OCI-LY7 (cell line): ENCODE measurements at regions of chr3 and their contacts with region 1.

Region 1: GRCh38 chr3:120182724-120183524 is 88.7 kb upstream of the GSK3B start:
- DNase-seq: peak; percentile 18
- H3K4me3 ChIP-seq: no peak overlapping the region
- H3K27ac ChIP-seq: no peak overlapping the region
- H3K4me1 ChIP-seq: no peaks in the 10 kb centered on the region
- CTCF ChIP-seq: peak; percentile 67

Region 2: DNA sequence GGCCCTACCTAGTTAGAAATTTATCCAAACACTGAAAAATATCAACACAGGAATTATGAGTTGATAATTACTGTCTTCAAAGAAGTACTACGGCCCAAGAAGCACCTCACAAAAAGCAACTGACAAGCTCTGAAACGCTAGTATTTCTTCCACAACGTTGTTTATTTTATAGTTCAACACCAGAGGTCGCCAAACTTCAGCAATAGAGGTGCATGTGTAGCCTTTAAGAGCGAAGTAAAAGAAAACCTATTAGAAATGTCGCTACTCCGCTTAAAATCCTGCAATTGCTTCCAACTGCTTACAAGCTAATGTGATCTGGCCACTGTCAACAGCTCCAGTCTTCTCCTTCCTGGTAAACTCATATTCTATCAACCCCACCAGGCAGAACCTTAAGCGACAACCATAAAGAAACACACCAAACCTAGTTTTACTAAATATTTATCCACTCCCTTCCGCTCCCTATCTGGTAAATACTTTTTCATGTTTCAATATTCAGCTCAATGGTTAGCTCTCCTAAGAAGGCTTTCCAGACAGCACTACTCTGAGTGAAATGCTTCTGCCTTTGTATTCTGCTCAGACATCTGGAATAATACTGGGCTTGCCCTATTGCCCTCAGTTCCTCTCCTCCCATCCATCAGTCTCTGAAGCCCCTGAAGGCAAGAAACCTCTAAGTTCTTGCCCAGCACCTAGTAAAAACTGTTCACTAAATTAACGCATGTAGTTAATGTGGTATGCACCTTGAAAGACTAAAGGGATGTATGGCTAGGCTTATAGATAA is 290.8 kb before region 1 on chr3:
- CTCF ChIA-PET with region 1: no interaction called
- POLR2A ChIA-PET with region 1: no interaction called
- intact Hi-C with region 1: loop called (anchors 5 kb)
- DNase-seq: peak; percentile 48
- H3K4me3 ChIP-seq: no peak overlapping the region
- H3K27ac ChIP-seq: no peak overlapping the region
- H3K4me1 ChIP-seq: no peaks in the 10 kb centered on the region
- CTCF ChIP-seq: peak; percentile 88